MCF 10A (cell line): ENCODE measurements at regions of chr9 and their contacts with region 1.

Region 1: GRCh38 chr9:101977614-101978210 is 239.3 kb upstream of the GRIN3A start:
- DNase-seq: peak; percentile 45
- H3K4me3 Mint-ChIP-seq: no peak overlapping the region
- H3K27ac Mint-ChIP-seq: no peak overlapping the region
- H3K4me1 Mint-ChIP-seq: no peaks in the 10 kb centered on the region
- H3K27me3 Mint-ChIP-seq: peaks cover 74% of the 10 kb centered on the region
- CTCF ChIP-seq: peak; percentile 70

Region 2: GRCh38 chr9:101878734-101879133 is 99.0 kb before region 1 on chr9:
- CTCF ChIA-PET with region 1: no interaction called
- POLR2A ChIA-PET with region 1: no interaction called
- intact Hi-C with region 1: no loop called
- DNase-seq: no peak
- H3K4me3 Mint-ChIP-seq: no peak overlapping the region
- H3K27ac Mint-ChIP-seq: no peak overlapping the region
- H3K4me1 Mint-ChIP-seq: no peaks in the 10 kb centered on the region
- H3K27me3 Mint-ChIP-seq: peaks cover 57% of the 10 kb centered on the region
- CTCF ChIP-seq: no peak

Region 3: GRCh38 chr9:101925498-101925897 is 52.2 kb before region 1 on chr9:
- CTCF ChIA-PET with region 1: no interaction called
- POLR2A ChIA-PET with region 1: no interaction called
- intact Hi-C with region 1: no loop called
- DNase-seq: no peak
- H3K4me3 Mint-ChIP-seq: no peak overlapping the region
- H3K27ac Mint-ChIP-seq: no peak overlapping the region
- H3K4me1 Mint-ChIP-seq: no peaks in the 10 kb centered on the region
- H3K27me3 Mint-ChIP-seq: peaks cover 59% of the 10 kb centered on the region
- CTCF ChIP-seq: no peak

Region 4: GRCh38 chr9:101951598-101951997 is 26.1 kb before region 1 on chr9:
- CTCF ChIA-PET with region 1: no interaction called
- POLR2A ChIA-PET with region 1: no interaction called
- intact Hi-C with region 1: no loop called
- DNase-seq: no peak
- H3K4me3 Mint-ChIP-seq: no peak overlapping the region
- H3K27ac Mint-ChIP-seq: no peak overlapping the region
- H3K4me1 Mint-ChIP-seq: no peaks in the 10 kb centered on the region
- H3K27me3 Mint-ChIP-seq: peaks cover 35% of the 10 kb centered on the region
- CTCF ChIP-seq: no peak

Region 5: DNA sequence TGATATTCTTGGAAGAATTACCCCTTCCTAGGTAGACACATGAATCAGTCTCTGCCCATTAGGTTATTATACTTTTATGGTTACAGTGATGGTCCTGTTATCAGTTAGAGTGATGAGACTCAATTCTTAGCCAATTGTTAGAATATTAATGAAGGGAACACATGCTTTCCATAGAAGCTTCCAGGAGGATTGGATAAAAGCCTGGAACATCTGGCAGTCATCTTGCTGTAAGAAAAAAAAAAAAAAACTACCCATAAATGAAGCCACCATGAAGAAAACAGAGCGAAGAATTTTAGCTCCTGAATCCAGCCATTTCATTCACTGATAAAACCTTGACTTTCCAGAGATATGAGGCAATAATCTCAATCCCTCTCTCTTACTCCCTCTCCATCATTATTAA is 23.2 kb after region 1 on chr9:
- CTCF ChIA-PET with region 1: no interaction called
- POLR2A ChIA-PET with region 1: no interaction called
- intact Hi-C with region 1: no loop called
- DNase-seq: no peak
- H3K4me3 Mint-ChIP-seq: no peak overlapping the region
- H3K27ac Mint-ChIP-seq: no peak overlapping the region
- H3K4me1 Mint-ChIP-seq: no peaks in the 10 kb centered on the region
- H3K27me3 Mint-ChIP-seq: no peaks in the 10 kb centered on the region
- CTCF ChIP-seq: no peak

Region 6: DNA sequence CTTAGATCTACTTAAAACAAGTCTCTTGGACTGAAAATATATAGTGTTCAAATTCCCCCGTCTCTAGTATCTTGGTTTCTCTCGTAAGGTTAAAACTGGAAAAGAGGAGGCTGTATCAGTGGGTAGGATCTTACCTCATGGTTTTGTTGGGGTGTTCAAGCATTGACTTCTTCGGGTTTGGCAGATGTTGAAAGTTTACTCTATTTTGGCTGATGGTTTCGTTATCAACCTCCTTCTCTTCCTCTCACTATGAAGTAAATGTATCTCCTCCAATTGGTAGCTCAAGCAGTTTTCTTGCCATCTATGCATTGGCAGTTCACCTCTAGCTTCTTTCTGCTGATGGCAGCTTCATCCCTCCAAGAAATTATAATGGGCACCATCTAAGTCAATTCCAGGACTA is 267.2 kb after region 1 on chr9:
- CTCF ChIA-PET with region 1: interaction called, 5 read pairs
- POLR2A ChIA-PET with region 1: no interaction called
- intact Hi-C with region 1: loop called (anchors 5 kb)
- DNase-seq: no peak
- H3K4me3 Mint-ChIP-seq: no peak overlapping the region
- H3K27ac Mint-ChIP-seq: no peak overlapping the region
- H3K4me1 Mint-ChIP-seq: no peaks in the 10 kb centered on the region
- H3K27me3 Mint-ChIP-seq: peaks cover 84% of the 10 kb centered on the region
- CTCF ChIP-seq: no peak